ENCODE measurements at regions of chr15 and their contacts with region 1.

Region 1: DNA sequence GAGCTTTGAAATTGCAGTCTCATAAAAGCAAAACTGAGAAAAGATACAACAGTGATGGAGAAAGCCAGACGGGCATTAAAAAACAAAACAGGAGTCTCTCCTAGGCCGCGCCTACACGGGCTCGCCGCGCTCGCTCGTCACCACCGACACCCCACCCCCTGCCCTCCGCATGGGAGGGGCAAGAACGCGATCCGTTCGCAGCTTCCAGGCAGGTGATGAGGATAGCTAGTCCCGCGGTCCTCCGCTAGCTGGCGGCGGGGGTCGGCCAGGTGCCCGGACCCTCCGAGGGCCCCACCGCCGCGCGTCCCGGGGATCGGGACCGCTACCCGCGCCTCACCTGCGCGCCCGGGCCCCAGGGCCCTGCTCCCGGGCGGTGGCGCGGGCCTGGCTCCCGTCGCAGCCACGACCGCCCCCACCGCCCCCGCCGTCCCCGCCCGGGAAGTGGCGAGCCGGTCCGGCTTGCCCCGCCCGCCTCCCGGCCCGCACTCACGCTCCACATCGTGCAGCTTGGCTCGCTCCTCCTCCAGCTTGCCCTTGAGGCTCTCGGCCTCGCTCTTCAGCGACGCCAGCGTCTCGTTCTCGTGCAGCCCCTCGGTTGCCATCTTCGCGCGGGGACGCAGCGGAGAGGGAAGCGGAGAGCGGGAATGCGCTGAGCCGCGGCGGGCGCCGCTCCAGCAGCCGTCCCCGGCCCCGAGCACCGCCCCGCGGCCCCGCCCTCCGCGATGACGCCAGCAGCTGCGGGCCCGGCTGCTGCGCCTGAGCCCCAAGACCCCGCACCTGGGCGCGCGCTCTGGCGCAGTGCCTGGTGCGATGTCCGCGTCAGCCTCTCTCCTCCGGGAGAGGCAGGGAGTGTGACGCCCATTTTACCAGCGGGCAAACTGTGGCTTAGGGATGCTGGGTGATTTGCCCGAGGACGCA is 11.7 kb downstream of the GNB5 start:
- DNase-seq: peak; percentile 77 to 94 (median 88)
- ATAC-seq: peak; percentile 82
- H3K4me3 ChIP-seq: peak overlapping the region; percentile 79
- H3K4me3 Mint-ChIP-seq: peak overlapping the region; percentile 99
- H3K27ac ChIP-seq: peak overlapping the region; percentile 89 to 95
- H3K27ac Mint-ChIP-seq: peak overlapping the region; percentile 94
- H3K4me1 ChIP-seq: peaks cover 28% of the 10 kb centered on the region
- H3K4me1 Mint-ChIP-seq: peaks cover 47% of the 10 kb centered on the region
- H3K27me3 ChIP-seq: no peaks in the 10 kb centered on the region
- H3K27me3 Mint-ChIP-seq: no peaks in the 10 kb centered on the region
- CTCF ChIP-seq: no peak

Region 2: GRCh38 chr15:51380999-51381795 is 798.3 kb before region 1 on chr15:
- CTCF ChIA-PET with region 1: no interaction called
- POLR2A ChIA-PET with region 1: no interaction called
- intact Hi-C with region 1: no loop called
- DNase-seq: peak in 3 of 14 experiments; percentile 8 to 54 (median 50)
- ATAC-seq: no peak
- H3K4me3 ChIP-seq: no peak overlapping the region
- H3K4me3 Mint-ChIP-seq: no peak overlapping the region
- H3K27ac ChIP-seq: no peak overlapping the region
- H3K27ac Mint-ChIP-seq: no peak overlapping the region
- H3K4me1 ChIP-seq: no peaks in the 10 kb centered on the region
- H3K4me1 Mint-ChIP-seq: no peaks in the 10 kb centered on the region
- H3K27me3 ChIP-seq: peaks cover 0 to 9% of the 10 kb centered on the region in 2 experiments
- H3K27me3 Mint-ChIP-seq: peaks cover 5% of the 10 kb centered on the region
- CTCF ChIP-seq: no peak

Region 3: GRCh38 chr15:51737280-51738017 is 442.1 kb before region 1 on chr15 and contains the start of gene LYSMD2:
- CTCF ChIA-PET with region 1: no interaction called
- POLR2A ChIA-PET with region 1: interaction called, 12 read pairs
- intact Hi-C with region 1: no loop called
- DNase-seq: peak; percentile 28 to 84 (median 68)
- ATAC-seq: peak; percentile 56
- H3K4me3 ChIP-seq: peak within 1 kb of the TSS; percentile 78
- H3K4me3 Mint-ChIP-seq: peak within 1 kb of the TSS; percentile 92
- H3K27ac ChIP-seq: peak within 1 kb of the TSS; percentile 81 to 83
- H3K27ac Mint-ChIP-seq: peak within 1 kb of the TSS; percentile 97
- H3K4me1 ChIP-seq: peaks cover 57% of the 10 kb centered on the region
- H3K4me1 Mint-ChIP-seq: peaks cover 61% of the 10 kb centered on the region
- H3K27me3 ChIP-seq: no peaks in the 10 kb centered on the region
- H3K27me3 Mint-ChIP-seq: no peaks in the 10 kb centered on the region
- CTCF ChIP-seq: no peak
- total RNA-seq, gene LYSMD2: 17.4 TPM

Region 4: DNA sequence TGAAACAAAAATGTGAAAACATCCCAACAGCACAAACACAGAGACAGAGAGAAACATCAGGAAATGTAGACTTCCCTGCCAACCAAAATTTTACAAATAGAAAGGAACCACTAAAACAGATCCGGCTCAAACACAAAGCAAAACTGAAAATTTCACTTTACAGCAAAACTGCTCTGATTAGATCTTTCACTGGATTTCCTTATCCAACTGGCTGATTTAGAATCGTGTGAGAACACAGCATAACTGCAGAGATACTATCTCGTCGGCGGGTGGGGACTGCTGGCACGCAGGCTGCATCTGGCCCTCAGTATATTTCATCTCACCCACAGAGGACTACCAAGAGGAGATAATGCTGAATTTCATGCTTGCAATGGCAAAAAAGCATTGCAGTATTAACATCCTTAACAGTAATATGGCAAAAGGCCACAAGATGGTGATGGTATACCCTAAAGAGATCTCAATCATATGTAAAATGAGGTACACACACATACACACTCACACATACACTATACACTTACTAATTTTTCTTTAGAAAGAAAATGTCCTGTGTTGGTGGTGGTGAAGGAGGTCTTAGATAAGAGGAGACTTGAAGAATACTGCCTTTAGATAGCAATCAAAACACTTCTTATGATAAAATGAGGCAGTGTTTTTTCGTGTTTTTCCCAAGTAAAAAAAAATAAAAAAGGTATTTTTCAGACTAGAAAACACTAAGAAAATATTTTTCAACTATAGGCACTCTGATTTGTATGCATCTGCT is 197.3 kb before region 1 on chr15:
- CTCF ChIA-PET with region 1: no interaction called
- POLR2A ChIA-PET with region 1: interaction called, 3 read pairs
- intact Hi-C with region 1: loop called in 1 of 2 experiments (anchors 5 kb)
- DNase-seq: peak in 11 of 14 experiments; percentile 1 to 83 (median 36)
- ATAC-seq: peak; percentile 97
- H3K4me3 ChIP-seq: peak overlapping the region; percentile 34
- H3K4me3 Mint-ChIP-seq: peak overlapping the region; percentile 84
- H3K27ac ChIP-seq: no peak overlapping the region
- H3K27ac Mint-ChIP-seq: peak overlapping the region; percentile 74
- H3K4me1 ChIP-seq: peaks cover 8% of the 10 kb centered on the region
- H3K4me1 Mint-ChIP-seq: peaks cover 11% of the 10 kb centered on the region
- H3K27me3 ChIP-seq: no peaks in the 10 kb centered on the region
- H3K27me3 Mint-ChIP-seq: no peaks in the 10 kb centered on the region
- CTCF ChIP-seq: peak; percentile 75

Region 5: GRCh38 chr15:52139599-52140491 is 39.7 kb before region 1 on chr15:
- CTCF ChIA-PET with region 1: no interaction called
- POLR2A ChIA-PET with region 1: no interaction called
- intact Hi-C with region 1: loop called in 1 of 2 experiments (anchors 5 kb)
- DNase-seq: peak; percentile 30 to 76 (median 54)
- ATAC-seq: peak; percentile 43
- H3K4me3 ChIP-seq: no peak overlapping the region
- H3K4me3 Mint-ChIP-seq: no peak overlapping the region
- H3K27ac ChIP-seq: no peak overlapping the region
- H3K27ac Mint-ChIP-seq: peak overlapping the region; percentile 49
- H3K4me1 ChIP-seq: peaks cover 27% of the 10 kb centered on the region
- H3K4me1 Mint-ChIP-seq: peaks cover 28% of the 10 kb centered on the region
- H3K27me3 ChIP-seq: no peaks in the 10 kb centered on the region
- H3K27me3 Mint-ChIP-seq: no peaks in the 10 kb centered on the region
- CTCF ChIP-seq: peak; percentile 74

Region 6: GRCh38 chr15:52193791-52194190 is 14.3 kb after region 1 on chr15:
- CTCF ChIA-PET with region 1: interaction called, 3 read pairs
- POLR2A ChIA-PET with region 1: interaction called, 11 read pairs
- intact Hi-C with region 1: no loop called
- DNase-seq: no peak
- ATAC-seq: no peak
- H3K4me3 ChIP-seq: no peak overlapping the region
- H3K4me3 Mint-ChIP-seq: no peak overlapping the region
- H3K27ac ChIP-seq: no peak overlapping the region
- H3K27ac Mint-ChIP-seq: no peak overlapping the region
- H3K4me1 ChIP-seq: no peaks in the 10 kb centered on the region
- H3K4me1 Mint-ChIP-seq: no peaks in the 10 kb centered on the region
- H3K27me3 ChIP-seq: no peaks in the 10 kb centered on the region
- H3K27me3 Mint-ChIP-seq: no peaks in the 10 kb centered on the region
- CTCF ChIP-seq: no peak

Region 7: DNA sequence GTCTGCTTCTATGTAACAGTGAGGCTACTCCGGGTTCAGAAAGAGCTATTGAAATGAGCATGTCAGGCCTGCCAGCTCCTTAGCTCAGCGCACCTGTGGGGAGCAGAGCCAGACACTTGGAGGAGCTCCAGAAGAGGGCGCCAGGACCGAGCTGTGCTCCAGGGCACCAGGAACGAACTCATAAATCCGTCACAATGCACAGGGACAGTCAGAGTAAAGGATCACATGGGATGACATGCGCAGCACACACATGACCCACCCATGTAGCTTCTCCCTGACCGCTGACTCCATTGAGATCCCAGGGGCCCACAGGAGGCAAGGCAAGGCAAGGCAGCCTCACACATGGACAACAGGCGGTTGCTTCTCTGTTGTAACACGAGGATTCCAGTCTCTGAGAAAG is 37.6 kb after region 1 on chr15:
- CTCF ChIA-PET with region 1: no interaction called
- POLR2A ChIA-PET with region 1: interaction called, 40 read pairs
- intact Hi-C with region 1: no loop called
- DNase-seq: peak in 5 of 14 experiments; percentile 18 to 42 (median 29)
- ATAC-seq: no peak
- H3K4me3 ChIP-seq: no peak overlapping the region
- H3K4me3 Mint-ChIP-seq: no peak overlapping the region
- H3K27ac ChIP-seq: no peak overlapping the region
- H3K27ac Mint-ChIP-seq: no peak overlapping the region
- H3K4me1 ChIP-seq: peaks cover 21% of the 10 kb centered on the region
- H3K4me1 Mint-ChIP-seq: peaks cover 16% of the 10 kb centered on the region
- H3K27me3 ChIP-seq: no peaks in the 10 kb centered on the region
- H3K27me3 Mint-ChIP-seq: no peaks in the 10 kb centered on the region
- CTCF ChIP-seq: peak; percentile 24

Measured in CD4-positive, alpha-beta T cell (primary cell).